ENCODE measurements at regions of chr9 and their contacts with region 1.

Region 1: DNA sequence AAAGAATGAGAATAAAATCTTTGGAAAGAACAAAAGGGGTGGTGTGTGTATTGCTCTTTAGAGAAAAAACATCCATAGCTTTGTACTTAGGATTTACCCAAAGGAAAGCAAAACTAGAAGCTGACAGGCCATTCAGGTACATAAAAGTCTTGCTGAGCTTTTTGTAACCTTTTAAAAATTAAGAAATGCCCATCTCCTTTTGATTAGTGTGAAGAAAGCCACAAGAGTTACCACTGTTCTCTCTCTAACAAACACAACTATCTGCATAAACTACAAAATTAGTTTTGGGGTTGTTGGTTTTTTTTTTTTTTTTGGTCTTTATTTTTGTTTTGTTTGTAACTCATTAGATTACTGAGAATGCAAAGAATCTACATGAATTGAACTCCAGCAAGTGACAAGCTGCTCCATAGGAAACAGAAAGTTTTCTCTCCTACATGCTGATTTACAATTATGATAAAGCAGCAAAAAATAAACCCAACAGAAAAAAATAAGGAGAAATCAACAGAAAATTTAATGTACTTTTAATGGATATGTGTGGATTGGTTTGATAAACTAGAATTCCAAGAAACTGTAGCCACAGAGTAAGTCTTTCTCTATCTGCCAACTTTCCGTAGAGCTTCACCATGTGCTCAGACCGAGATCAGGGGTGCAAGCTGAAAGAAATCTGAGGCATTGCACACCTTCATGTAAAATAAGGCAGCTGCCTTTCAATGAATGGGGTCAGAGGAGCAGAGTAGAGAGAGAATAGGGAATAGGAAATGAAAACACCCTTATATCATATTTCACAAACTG is 12.3 kb downstream of the BAAT start:
- DNase-seq: no peak
- H3K4me3 ChIP-seq: no peak overlapping the region
- H3K4me3 Mint-ChIP-seq: no peak overlapping the region
- H3K27ac Mint-ChIP-seq: no peak overlapping the region
- H3K4me1 ChIP-seq: peaks cover 15% of the 10 kb centered on the region
- H3K4me1 Mint-ChIP-seq: peaks cover 7% of the 10 kb centered on the region
- H3K27me3 ChIP-seq: no peaks in the 10 kb centered on the region
- H3K27me3 Mint-ChIP-seq: no peaks in the 10 kb centered on the region
- CTCF ChIP-seq: no peak

Region 2: GRCh38 chr9:101418518-101419430 is 46.3 kb after region 1 on chr9:
- CTCF ChIA-PET with region 1: no interaction called
- POLR2A ChIA-PET with region 1: no interaction called
- intact Hi-C with region 1: no loop called
- DNase-seq: no peak
- H3K4me3 ChIP-seq: no peak overlapping the region
- H3K4me3 Mint-ChIP-seq: no peak overlapping the region
- H3K27ac Mint-ChIP-seq: no peak overlapping the region
- H3K4me1 ChIP-seq: peaks cover 10% of the 10 kb centered on the region
- H3K4me1 Mint-ChIP-seq: no peaks in the 10 kb centered on the region
- H3K27me3 ChIP-seq: no peaks in the 10 kb centered on the region
- H3K27me3 Mint-ChIP-seq: no peaks in the 10 kb centered on the region
- CTCF ChIP-seq: no peak

Region 3: GRCh38 chr9:102035929-102036328 is 663.4 kb after region 1 on chr9:
- CTCF ChIA-PET with region 1: interaction called, 10 read pairs
- POLR2A ChIA-PET with region 1: no interaction called
- intact Hi-C with region 1: no loop called
- DNase-seq: no peak
- H3K4me3 ChIP-seq: no peak overlapping the region
- H3K4me3 Mint-ChIP-seq: no peak overlapping the region
- H3K27ac Mint-ChIP-seq: no peak overlapping the region
- H3K4me1 ChIP-seq: no peaks in the 10 kb centered on the region
- H3K4me1 Mint-ChIP-seq: no peaks in the 10 kb centered on the region
- H3K27me3 ChIP-seq: no peaks in the 10 kb centered on the region
- H3K27me3 Mint-ChIP-seq: no peaks in the 10 kb centered on the region
- CTCF ChIP-seq: no peak

Measured in Caco-2 (cell line).